Common myeloid progenitor, CD34-positive (primary cell): ENCODE measurements at regions of chr6 and their contacts with region 1.

Region 1: GRCh38 chr6:79570129-79571029 is 33.1 kb upstream of the LCA5 start:
- DNase-seq: peak; percentile 57 to 77 (median 69)
- H3K4me3 ChIP-seq: peak overlapping the region in 5 of 7 experiments; percentile 24 to 71 (median 27)
- H3K27ac ChIP-seq: no peak overlapping the region
- H3K4me1 ChIP-seq: peaks cover 0 to 2% (median 0%) of the 10 kb centered on the region in 4 experiments
- H3K27me3 ChIP-seq: no peaks in the 10 kb centered on the region

Region 2: GRCh38 chr6:79672631-79673111 is 102.3 kb after region 1 on chr6:
- CTCF ChIA-PET with region 1: interaction called, 16 read pairs
- POLR2A ChIA-PET with region 1: interaction called, 3 read pairs
- DNase-seq: peak; percentile 36 to 64 (median 59)
- H3K4me3 ChIP-seq: no peak overlapping the region
- H3K27ac ChIP-seq: no peak overlapping the region
- H3K4me1 ChIP-seq: peaks cover 0 to 17% (median 10%) of the 10 kb centered on the region in 4 experiments
- H3K27me3 ChIP-seq: no peaks in the 10 kb centered on the region

Region 3: GRCh38 chr6:79713701-79714322 is 143.4 kb after region 1 on chr6:
- CTCF ChIA-PET with region 1: interaction called, 18 read pairs
- POLR2A ChIA-PET with region 1: no interaction called
- DNase-seq: peak; percentile 58 to 80 (median 73)
- H3K4me3 ChIP-seq: no peak overlapping the region
- H3K27ac ChIP-seq: no peak overlapping the region
- H3K4me1 ChIP-seq: no peaks in the 10 kb centered on the region
- H3K27me3 ChIP-seq: peaks cover 0 to 3% (median 0%) of the 10 kb centered on the region in 5 experiments

Region 4: GRCh38 chr6:79724816-79725215 is 154.4 kb after region 1 on chr6:
- CTCF ChIA-PET with region 1: no interaction called
- POLR2A ChIA-PET with region 1: no interaction called
- DNase-seq: no peak
- H3K4me3 ChIP-seq: no peak overlapping the region
- H3K27ac ChIP-seq: no peak overlapping the region
- H3K4me1 ChIP-seq: no peaks in the 10 kb centered on the region
- H3K27me3 ChIP-seq: peaks cover 0 to 3% (median 0%) of the 10 kb centered on the region in 5 experiments